Gastrocnemius medialis (tissue), 4 donors: ENCODE measurements at regions of chr20 and their contacts with region 1.

Region 1: DNA sequence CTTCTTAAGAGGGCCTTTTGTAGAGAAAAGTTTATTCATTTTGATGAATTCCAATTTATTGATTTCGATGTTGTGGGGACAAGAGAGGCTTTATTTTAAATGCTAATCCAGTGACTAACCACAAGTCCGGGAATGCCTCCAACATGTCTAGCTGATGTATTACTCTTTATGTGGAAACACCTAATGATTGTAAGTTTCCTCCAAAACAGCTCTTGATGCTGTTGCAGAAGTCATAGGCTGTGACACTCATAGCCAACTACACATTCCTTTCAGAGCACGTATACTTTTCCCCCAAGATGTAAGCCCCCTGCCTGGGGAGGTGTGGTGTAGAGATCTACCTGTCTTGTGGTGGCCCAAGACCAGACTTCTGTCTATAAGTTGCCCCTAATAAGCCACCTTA is 61.3 kb upstream of the RNF24 start:
- DNase-seq: no peak
- ATAC-seq: no peak
- H3K4me3 ChIP-seq: no peak overlapping the region
- H3K27ac ChIP-seq: no peak overlapping the region
- H3K4me1 ChIP-seq: no peaks in the 10 kb centered on the region
- H3K27me3 ChIP-seq: no peaks in the 10 kb centered on the region
- CTCF ChIP-seq: no peak
- POLR2A ChIP-seq: no peak

Region 2: GRCh38 chr20:3940905-3941304 is 135.8 kb before region 1 on chr20:
- in situ Hi-C with region 1: no loop called
- intact Hi-C with region 1: loop called (anchors 5 kb)
- DNase-seq: no peak
- ATAC-seq: no peak
- H3K4me3 ChIP-seq: no peak overlapping the region
- H3K27ac ChIP-seq: no peak overlapping the region
- H3K4me1 ChIP-seq: peaks cover under 1 to 2% of the 10 kb centered on the region in 2 donors
- H3K27me3 ChIP-seq: no peaks in the 10 kb centered on the region
- CTCF ChIP-seq: no peak
- POLR2A ChIP-seq: no peak

Region 3: GRCh38 chr20:4026093-4026601 is 50.5 kb before region 1 on chr20:
- in situ Hi-C with region 1: loop called in 1 of 4 experiments (anchors 10 kb)
- intact Hi-C with region 1: no loop called
- DNase-seq: no peak
- ATAC-seq: peak; percentile 41 to 58
- H3K4me3 ChIP-seq: no peak overlapping the region
- H3K27ac ChIP-seq: no peak overlapping the region
- H3K4me1 ChIP-seq: peaks cover 0 to 4% of the 10 kb centered on the region in 2 donors
- H3K27me3 ChIP-seq: no peaks in the 10 kb centered on the region
- CTCF ChIP-seq: peak in 2 of 5 experiments; percentile 26
- POLR2A ChIP-seq: no peak